Natural killer cell (primary cell): ENCODE measurements at regions of chr4 and their contacts with region 1.

Region 1: DNA sequence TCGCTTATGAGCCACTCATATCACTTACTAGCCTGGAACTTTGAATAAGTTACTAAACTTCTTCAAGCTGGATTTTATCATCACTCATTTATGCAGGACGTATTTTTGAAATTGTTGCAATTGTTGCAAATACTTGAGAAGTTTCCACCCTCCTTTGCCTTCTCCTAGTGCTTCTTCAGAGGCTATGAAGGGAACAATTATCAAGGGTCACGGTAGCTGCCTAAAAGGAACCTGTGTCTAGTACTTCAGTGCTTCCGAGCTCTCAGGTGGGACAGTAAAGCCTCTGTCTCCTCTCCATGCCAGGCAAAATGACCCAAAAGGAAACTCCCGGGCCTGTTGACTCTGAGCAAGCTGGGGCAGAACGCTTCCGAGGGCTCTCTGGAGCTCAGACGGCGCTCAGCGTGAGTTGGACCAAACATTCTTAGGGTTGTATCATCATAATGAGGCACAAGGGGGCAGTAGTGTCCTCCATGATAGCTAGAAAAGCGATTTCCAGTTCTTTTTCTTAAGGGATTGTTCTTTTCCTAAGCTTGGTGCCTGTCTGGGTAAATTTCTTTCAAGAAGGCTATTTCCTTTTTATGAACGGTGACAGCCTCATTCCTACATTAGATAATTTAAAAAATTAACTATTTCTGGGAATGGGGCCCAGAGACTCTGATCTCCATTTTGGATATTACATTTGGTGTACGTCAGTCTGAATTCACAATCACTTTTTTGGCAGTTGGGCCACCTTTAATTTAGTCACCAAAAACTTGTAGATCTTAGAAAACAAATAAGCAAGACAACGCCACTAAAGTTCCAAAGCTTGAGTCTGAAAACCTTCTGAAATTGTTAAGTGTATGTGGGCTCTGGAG is 73.1 kb downstream of the PACRGL start:
- DNase-seq: peak; percentile 25 to 61
- ATAC-seq: peak; percentile 70 to 85 (median 73)
- H3K4me3 ChIP-seq: no peak overlapping the region
- H3K4me3 Mint-ChIP-seq: no peak overlapping the region
- H3K27ac ChIP-seq: no peak overlapping the region
- H3K27ac Mint-ChIP-seq: no peak overlapping the region
- H3K4me1 ChIP-seq: peaks cover 3% of the 10 kb centered on the region
- H3K4me1 Mint-ChIP-seq: peaks cover 11 to 17% of the 10 kb centered on the region in 2 donors
- H3K27me3 ChIP-seq: no peaks in the 10 kb centered on the region
- H3K27me3 Mint-ChIP-seq: peaks cover 0 to 6% of the 10 kb centered on the region in 2 donors
- CTCF ChIP-seq: peak; percentile 77

Region 2: DNA sequence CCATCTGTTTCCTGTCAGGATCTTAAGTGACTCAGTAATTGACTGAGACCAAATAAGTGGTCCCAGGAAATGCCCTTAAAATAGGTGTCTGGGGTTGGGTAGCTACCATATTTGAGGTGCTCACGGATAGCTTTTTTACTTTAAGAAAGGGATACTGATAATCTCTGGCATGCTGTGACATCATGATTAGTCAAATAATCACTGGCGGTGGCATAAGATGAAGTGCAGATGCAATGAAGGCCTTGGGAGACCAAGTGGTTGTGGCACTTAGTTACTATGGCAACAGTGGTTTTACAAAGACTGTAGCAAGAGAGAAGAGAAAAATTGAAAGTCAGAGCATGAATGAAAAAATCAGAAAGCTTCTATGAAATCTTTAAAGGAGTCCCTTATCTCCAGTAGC is 636.2 kb before region 1 on chr4:
- intact Hi-C with region 1: no loop called
- DNase-seq: no peak
- ATAC-seq: no peak
- H3K4me3 ChIP-seq: no peak overlapping the region
- H3K4me3 Mint-ChIP-seq: no peak overlapping the region
- H3K27ac ChIP-seq: no peak overlapping the region
- H3K27ac Mint-ChIP-seq: no peak overlapping the region
- H3K4me1 ChIP-seq: no peaks in the 10 kb centered on the region
- H3K4me1 Mint-ChIP-seq: no peaks in the 10 kb centered on the region
- H3K27me3 ChIP-seq: no peaks in the 10 kb centered on the region
- H3K27me3 Mint-ChIP-seq: no peaks in the 10 kb centered on the region
- CTCF ChIP-seq: no peak

Region 3: GRCh38 chr4:20272411-20272872 is 500.9 kb before region 1 on chr4:
- intact Hi-C with region 1: no loop called
- DNase-seq: no peak
- ATAC-seq: no peak
- H3K4me3 ChIP-seq: no peak overlapping the region
- H3K4me3 Mint-ChIP-seq: no peak overlapping the region
- H3K27ac ChIP-seq: no peak overlapping the region
- H3K27ac Mint-ChIP-seq: no peak overlapping the region
- H3K4me1 ChIP-seq: no peaks in the 10 kb centered on the region
- H3K4me1 Mint-ChIP-seq: no peaks in the 10 kb centered on the region
- H3K27me3 ChIP-seq: no peaks in the 10 kb centered on the region
- H3K27me3 Mint-ChIP-seq: no peaks in the 10 kb centered on the region
- CTCF ChIP-seq: no peak

Region 4: GRCh38 chr4:21134994-21135393 is 361.6 kb after region 1 on chr4:
- intact Hi-C with region 1: loop called (anchors 1 kb)
- DNase-seq: peak in 1 of 2 donors; percentile 36
- ATAC-seq: peak; percentile 63 to 81 (median 66)
- H3K4me3 ChIP-seq: no peak overlapping the region
- H3K4me3 Mint-ChIP-seq: no peak overlapping the region
- H3K27ac ChIP-seq: no peak overlapping the region
- H3K27ac Mint-ChIP-seq: no peak overlapping the region
- H3K4me1 ChIP-seq: no peaks in the 10 kb centered on the region
- H3K4me1 Mint-ChIP-seq: peaks cover 5 to 7% of the 10 kb centered on the region in 2 donors
- H3K27me3 ChIP-seq: no peaks in the 10 kb centered on the region
- H3K27me3 Mint-ChIP-seq: peaks cover 0 to 6% of the 10 kb centered on the region in 2 donors
- CTCF ChIP-seq: peak; percentile 67

Region 5: GRCh38 chr4:21765810-21766407 is 992.5 kb after region 1 on chr4:
- intact Hi-C with region 1: loop called (anchors 2 kb)
- DNase-seq: peak in 1 of 2 donors; percentile 46
- ATAC-seq: peak in 2 of 3 donors; percentile 54 to 57
- H3K4me3 ChIP-seq: no peak overlapping the region
- H3K4me3 Mint-ChIP-seq: no peak overlapping the region
- H3K27ac ChIP-seq: no peak overlapping the region
- H3K27ac Mint-ChIP-seq: no peak overlapping the region
- H3K4me1 ChIP-seq: no peaks in the 10 kb centered on the region
- H3K4me1 Mint-ChIP-seq: peaks cover 0 to 5% of the 10 kb centered on the region in 2 donors
- H3K27me3 ChIP-seq: no peaks in the 10 kb centered on the region
- H3K27me3 Mint-ChIP-seq: peaks cover 0 to 5% of the 10 kb centered on the region in 2 donors
- CTCF ChIP-seq: peak; percentile 62